ENCODE measurements at regions of chr2 and their contacts with region 1.

Region 1: GRCh38 chr2:231706731-231707624 is 1.3 kb upstream of the PTMA start:
- DNase-seq: peak; percentile 99
- H3K4me3 Mint-ChIP-seq: peak overlapping the region; percentile 89
- H3K27ac Mint-ChIP-seq: peak overlapping the region; percentile 100
- H3K4me1 Mint-ChIP-seq: peaks cover 9% of the 10 kb centered on the region
- H3K27me3 Mint-ChIP-seq: no peaks in the 10 kb centered on the region
- CTCF ChIP-seq: peak; percentile 85

Region 2: GRCh38 chr2:231597014-231597611 is 109.9 kb before region 1 on chr2:
- CTCF ChIA-PET with region 1: no interaction called
- POLR2A ChIA-PET with region 1: no interaction called
- intact Hi-C with region 1: no loop called
- DNase-seq: no peak
- H3K4me3 Mint-ChIP-seq: no peak overlapping the region
- H3K27ac Mint-ChIP-seq: no peak overlapping the region
- H3K4me1 Mint-ChIP-seq: peaks cover 5% of the 10 kb centered on the region
- H3K27me3 Mint-ChIP-seq: no peaks in the 10 kb centered on the region
- CTCF ChIP-seq: no peak

Region 3: GRCh38 chr2:231612179-231613053 is 94.6 kb before region 1 on chr2:
- CTCF ChIA-PET with region 1: interaction called, 60 read pairs
- POLR2A ChIA-PET with region 1: interaction called, 33 read pairs
- intact Hi-C with region 1: no loop called
- DNase-seq: peak; percentile 95
- H3K4me3 Mint-ChIP-seq: peak overlapping the region; percentile 63
- H3K27ac Mint-ChIP-seq: peak overlapping the region; percentile 92
- H3K4me1 Mint-ChIP-seq: peaks cover 38% of the 10 kb centered on the region
- H3K27me3 Mint-ChIP-seq: no peaks in the 10 kb centered on the region
- CTCF ChIP-seq: peak; percentile 95

Region 4: GRCh38 chr2:231648587-231649174 is 58.3 kb before region 1 on chr2:
- CTCF ChIA-PET with region 1: interaction called, 5 read pairs
- POLR2A ChIA-PET with region 1: interaction called, 11 read pairs
- intact Hi-C with region 1: no loop called
- DNase-seq: peak; percentile 86
- H3K4me3 Mint-ChIP-seq: no peak overlapping the region
- H3K27ac Mint-ChIP-seq: no peak overlapping the region
- H3K4me1 Mint-ChIP-seq: peaks cover 16% of the 10 kb centered on the region
- H3K27me3 Mint-ChIP-seq: no peaks in the 10 kb centered on the region
- CTCF ChIP-seq: peak; percentile 73

Region 5: GRCh38 chr2:231680992-231681853 is 25.8 kb before region 1 on chr2:
- CTCF ChIA-PET with region 1: interaction called, 352 read pairs
- POLR2A ChIA-PET with region 1: interaction called, 14 read pairs
- intact Hi-C with region 1: no loop called
- DNase-seq: peak; percentile 72
- H3K4me3 Mint-ChIP-seq: peak overlapping the region; percentile 66
- H3K27ac Mint-ChIP-seq: peak overlapping the region; percentile 69
- H3K4me1 Mint-ChIP-seq: peaks cover 9% of the 10 kb centered on the region
- H3K27me3 Mint-ChIP-seq: no peaks in the 10 kb centered on the region
- CTCF ChIP-seq: no peak

Region 6: DNA sequence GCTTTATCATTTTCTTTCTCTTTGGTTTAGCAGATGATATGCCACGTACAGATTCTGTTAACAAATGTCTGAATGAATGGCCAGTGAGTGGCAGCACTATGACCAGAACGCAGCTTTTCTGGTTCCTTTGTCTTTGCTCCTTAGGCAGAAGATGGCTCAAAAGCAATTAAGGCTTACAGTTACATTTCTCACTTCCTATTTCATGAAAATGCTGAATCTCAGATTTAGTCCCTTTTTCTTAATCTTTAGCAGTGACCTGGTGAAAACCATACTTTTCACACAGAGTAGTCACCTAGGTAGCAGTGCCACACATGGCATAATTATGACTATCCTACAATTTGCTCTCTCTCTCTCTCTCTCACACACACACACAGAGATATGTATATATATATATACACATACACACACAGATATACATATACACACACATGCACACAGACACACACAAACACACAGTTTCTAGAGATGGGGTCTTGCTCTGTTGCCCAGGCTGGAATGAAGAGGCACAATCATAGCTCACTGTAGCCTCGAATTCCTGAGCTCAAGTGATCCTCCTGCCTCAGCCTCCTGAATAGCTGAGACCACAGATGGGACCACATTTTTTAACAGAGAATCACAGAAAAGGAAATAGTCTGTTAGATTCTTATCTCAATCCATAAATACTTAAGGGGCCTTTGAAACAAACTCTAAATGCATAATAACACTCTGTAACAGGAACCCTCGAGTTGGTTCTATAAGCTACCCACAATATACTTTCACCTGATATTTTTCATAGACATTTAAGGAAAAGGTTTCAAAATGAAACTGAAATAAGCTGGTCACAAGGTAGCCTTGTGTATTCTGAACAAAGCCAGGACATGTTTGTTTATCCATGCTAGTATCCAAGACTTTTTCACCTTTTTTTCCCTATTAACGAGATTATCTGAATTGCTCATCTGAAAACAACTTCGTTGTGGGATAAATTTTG is 62.5 kb after region 1 on chr2:
- CTCF ChIA-PET with region 1: no interaction called
- POLR2A ChIA-PET with region 1: no interaction called
- intact Hi-C with region 1: no loop called
- DNase-seq: no peak
- H3K4me3 Mint-ChIP-seq: no peak overlapping the region
- H3K27ac Mint-ChIP-seq: no peak overlapping the region
- H3K4me1 Mint-ChIP-seq: peaks cover 3% of the 10 kb centered on the region
- H3K27me3 Mint-ChIP-seq: no peaks in the 10 kb centered on the region
- CTCF ChIP-seq: no peak

Region 7: GRCh38 chr2:231780909-231781797 is 74.2 kb after region 1 on chr2 and contains the start of gene PDE6D:
- CTCF ChIA-PET with region 1: no interaction called
- POLR2A ChIA-PET with region 1: interaction called, 12 read pairs
- intact Hi-C with region 1: loop called (anchors 5 kb)
- DNase-seq: peak; percentile 99
- H3K4me3 Mint-ChIP-seq: peak within 1 kb of the TSS; percentile 98
- H3K27ac Mint-ChIP-seq: peak within 1 kb of the TSS; percentile 95
- H3K4me1 Mint-ChIP-seq: peaks cover 30% of the 10 kb centered on the region
- H3K27me3 Mint-ChIP-seq: no peaks in the 10 kb centered on the region
- CTCF ChIP-seq: no peak
- total RNA-seq, gene PDE6D: 13.2 and 20.6 TPM in 2 replicates